Activated CD4-positive, alpha-beta T cell treated with anti-CD3 and anti-CD28 coated beads for 36 hours (primary cell): ENCODE measurements at regions of chr19 and their contacts with region 1.

Region 1: GRCh38 chr19:12551060-12551832 is at the start of gene ZNF564:
- DNase-seq: peak; percentile 94
- ATAC-seq: peak; percentile 99
- H3K4me3 Mint-ChIP-seq: peak within 1 kb of the TSS; percentile 98
- H3K27ac Mint-ChIP-seq: peak within 1 kb of the TSS; percentile 97
- H3K4me1 Mint-ChIP-seq: peaks cover 40% of the 10 kb centered on the region
- H3K27me3 Mint-ChIP-seq: no peaks in the 10 kb centered on the region
- total RNA-seq, gene ZNF564: 5.2 to 5.6 TPM

Region 2: GRCh38 chr19:12162882-12163806 is 388.1 kb before region 1 on chr19 and contains the start of gene ZNF136:
- CTCF ChIA-PET with region 1: no interaction called
- POLR2A ChIA-PET with region 1: no interaction called
- intact Hi-C with region 1: loop called in 1 of 2 experiments (anchors 1 kb)
- DNase-seq: peak; percentile 97
- ATAC-seq: peak; percentile 100
- H3K4me3 Mint-ChIP-seq: peak within 1 kb of the TSS; percentile 98
- H3K27ac Mint-ChIP-seq: peak within 1 kb of the TSS; percentile 99
- H3K4me1 Mint-ChIP-seq: peaks cover 38% of the 10 kb centered on the region
- H3K27me3 Mint-ChIP-seq: no peaks in the 10 kb centered on the region
- total RNA-seq, gene ZNF136: 11.7 to 12.9 TPM

Region 3: GRCh38 chr19:12333162-12334159 is 217.8 kb before region 1 on chr19 and contains the start of gene ZNF563:
- CTCF ChIA-PET with region 1: no interaction called
- POLR2A ChIA-PET with region 1: no interaction called
- intact Hi-C with region 1: loop called in 1 of 2 experiments (anchors 1 kb)
- DNase-seq: peak; percentile 99
- ATAC-seq: peak; percentile 93
- H3K4me3 Mint-ChIP-seq: peak within 1 kb of the TSS; percentile 78
- H3K27ac Mint-ChIP-seq: peak within 1 kb of the TSS; percentile 98
- H3K4me1 Mint-ChIP-seq: peaks cover 32% of the 10 kb centered on the region
- H3K27me3 Mint-ChIP-seq: no peaks in the 10 kb centered on the region
- total RNA-seq, gene ZNF563: 6.6 to 6.7 TPM

Region 4: GRCh38 chr19:12400633-12401502 is 150.4 kb before region 1 on chr19 and contains the start of gene ZNF799:
- CTCF ChIA-PET with region 1: no interaction called
- POLR2A ChIA-PET with region 1: no interaction called
- intact Hi-C with region 1: loop called in 1 of 2 experiments (anchors 1 kb)
- DNase-seq: peak; percentile 94
- ATAC-seq: peak; percentile 96
- H3K4me3 Mint-ChIP-seq: peak within 1 kb of the TSS; percentile 86
- H3K27ac Mint-ChIP-seq: peak within 1 kb of the TSS; percentile 77
- H3K4me1 Mint-ChIP-seq: peaks cover 13% of the 10 kb centered on the region
- H3K27me3 Mint-ChIP-seq: no peaks in the 10 kb centered on the region
- total RNA-seq, gene ZNF799: 4.0 to 4.3 TPM

Region 5: GRCh38 chr19:12484371-12485051 is 66.7 kb before region 1 on chr19 and contains the start of gene ZNF709:
- CTCF ChIA-PET with region 1: no interaction called
- POLR2A ChIA-PET with region 1: no interaction called
- intact Hi-C with region 1: loop called in 1 of 2 experiments (anchors 1 kb)
- DNase-seq: peak; percentile 92
- ATAC-seq: peak; percentile 98
- H3K4me3 Mint-ChIP-seq: peak within 1 kb of the TSS; percentile 87
- H3K27ac Mint-ChIP-seq: peak within 1 kb of the TSS; percentile 58
- H3K4me1 Mint-ChIP-seq: peaks cover 27% of the 10 kb centered on the region
- H3K27me3 Mint-ChIP-seq: no peaks in the 10 kb centered on the region
- total RNA-seq, gene ZNF709: 1.7 to 2.1 TPM

Region 6: DNA sequence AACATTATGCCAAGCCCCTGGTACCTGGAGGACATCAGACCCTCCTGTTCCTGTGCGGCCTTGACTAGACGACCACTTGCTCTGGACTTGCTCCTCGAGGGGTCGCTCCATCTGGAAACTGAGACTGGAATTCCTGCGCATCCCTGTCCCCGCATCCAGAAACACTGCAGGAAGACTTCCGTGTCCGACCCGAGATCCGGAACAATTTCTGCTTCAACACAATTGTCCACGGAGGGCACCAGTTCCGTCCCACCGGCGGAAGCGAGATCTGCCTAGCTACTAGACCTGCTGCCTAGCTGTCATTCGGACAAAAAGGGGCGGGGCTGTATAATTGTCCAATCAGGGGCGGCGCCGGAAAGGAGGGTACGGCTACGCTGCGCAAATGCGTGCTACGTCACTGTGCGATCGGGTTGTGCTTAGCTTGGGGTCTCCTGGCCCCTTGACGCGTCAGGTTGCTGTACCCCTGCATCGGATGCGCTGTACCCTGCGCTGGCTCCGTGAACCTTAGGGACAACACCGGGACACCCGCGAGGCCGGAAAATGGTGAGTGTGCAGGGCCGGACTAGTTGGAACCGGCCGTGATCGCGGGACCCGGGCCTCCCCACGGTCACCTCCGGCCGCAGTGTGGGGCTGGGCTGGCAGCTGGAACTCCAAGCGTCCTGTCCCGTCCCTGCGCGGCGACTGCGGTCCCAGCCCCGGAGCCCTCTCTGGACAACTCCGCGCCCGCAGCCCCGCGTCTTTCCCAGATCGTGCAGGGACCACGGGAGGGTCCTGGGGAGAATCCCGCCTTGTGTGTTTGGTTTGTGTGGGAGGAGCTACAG is 59.5 kb after region 1 on chr19 and contains the starts of genes ZNF490 and ZNF791:
- CTCF ChIA-PET with region 1: no interaction called
- POLR2A ChIA-PET with region 1: no interaction called
- intact Hi-C with region 1: loop called in 1 of 2 experiments (anchors 1 kb)
- DNase-seq: peak; percentile 98
- ATAC-seq: peak; percentile 91
- H3K4me3 Mint-ChIP-seq: peak within 1 kb of the TSS; percentile 94
- H3K27ac Mint-ChIP-seq: peak within 1 kb of the TSS; percentile 99
- H3K4me1 Mint-ChIP-seq: peaks cover 31% of the 10 kb centered on the region
- H3K27me3 Mint-ChIP-seq: no peaks in the 10 kb centered on the region
- total RNA-seq, gene ZNF490: 7.7 to 8.7 TPM
- total RNA-seq, gene ZNF791: 16.1 to 18.1 TPM

Region 7: DNA sequence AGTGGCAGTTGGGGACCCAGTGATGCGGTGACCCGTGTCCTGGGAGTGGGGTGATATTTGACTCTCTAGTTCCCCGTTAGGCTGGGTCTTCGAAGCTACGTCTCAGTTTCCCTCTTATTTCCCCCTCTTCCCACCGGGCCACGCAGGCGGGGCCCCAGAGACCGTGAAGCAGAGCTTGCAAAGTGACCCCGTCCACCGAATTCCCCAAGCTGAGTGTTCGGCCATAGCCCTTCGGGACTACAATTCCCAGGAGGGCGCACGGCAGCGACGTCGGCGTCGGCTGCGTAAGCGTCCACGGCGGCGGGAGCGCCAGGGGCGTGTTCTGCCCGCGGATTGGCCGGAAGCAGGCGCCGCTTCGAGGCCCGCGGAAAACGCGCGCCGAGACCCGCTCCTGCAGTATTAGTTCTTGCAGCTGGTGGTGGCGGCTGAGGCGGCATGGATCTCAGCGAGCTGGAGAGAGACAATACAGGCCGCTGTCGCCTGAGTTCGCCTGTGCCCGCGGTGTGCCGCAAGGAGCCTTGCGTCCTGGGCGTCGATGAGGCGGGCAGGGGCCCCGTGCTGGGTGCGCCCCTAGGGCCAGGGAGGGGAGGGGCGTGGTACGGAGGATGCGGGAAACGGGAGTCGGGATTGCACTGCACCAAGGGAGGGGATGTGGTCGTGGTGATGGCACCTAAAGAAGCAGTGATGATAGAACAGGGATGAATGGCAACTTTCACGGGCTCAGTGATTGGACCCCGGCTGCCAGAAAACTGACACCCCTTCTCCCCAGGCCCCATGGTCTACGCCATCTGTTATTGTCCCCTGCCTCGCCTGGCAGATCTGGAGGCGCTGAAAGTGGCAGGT is 255.2 kb after region 1 on chr19 and contains the start of gene RNASEH2A:
- CTCF ChIA-PET with region 1: no interaction called
- POLR2A ChIA-PET with region 1: no interaction called
- intact Hi-C with region 1: loop called in 1 of 2 experiments (anchors 1 kb)
- DNase-seq: peak; percentile 94
- ATAC-seq: peak; percentile 93
- H3K4me3 Mint-ChIP-seq: peak within 1 kb of the TSS; percentile 89
- H3K27ac Mint-ChIP-seq: peak within 1 kb of the TSS; percentile 80
- H3K4me1 Mint-ChIP-seq: peaks cover 24% of the 10 kb centered on the region
- H3K27me3 Mint-ChIP-seq: no peaks in the 10 kb centered on the region
- total RNA-seq, gene RNASEH2A: 27.0 to 51.1 TPM